ENCODE measurements at regions of chr19 and their contacts with region 1.

Region 1: DNA sequence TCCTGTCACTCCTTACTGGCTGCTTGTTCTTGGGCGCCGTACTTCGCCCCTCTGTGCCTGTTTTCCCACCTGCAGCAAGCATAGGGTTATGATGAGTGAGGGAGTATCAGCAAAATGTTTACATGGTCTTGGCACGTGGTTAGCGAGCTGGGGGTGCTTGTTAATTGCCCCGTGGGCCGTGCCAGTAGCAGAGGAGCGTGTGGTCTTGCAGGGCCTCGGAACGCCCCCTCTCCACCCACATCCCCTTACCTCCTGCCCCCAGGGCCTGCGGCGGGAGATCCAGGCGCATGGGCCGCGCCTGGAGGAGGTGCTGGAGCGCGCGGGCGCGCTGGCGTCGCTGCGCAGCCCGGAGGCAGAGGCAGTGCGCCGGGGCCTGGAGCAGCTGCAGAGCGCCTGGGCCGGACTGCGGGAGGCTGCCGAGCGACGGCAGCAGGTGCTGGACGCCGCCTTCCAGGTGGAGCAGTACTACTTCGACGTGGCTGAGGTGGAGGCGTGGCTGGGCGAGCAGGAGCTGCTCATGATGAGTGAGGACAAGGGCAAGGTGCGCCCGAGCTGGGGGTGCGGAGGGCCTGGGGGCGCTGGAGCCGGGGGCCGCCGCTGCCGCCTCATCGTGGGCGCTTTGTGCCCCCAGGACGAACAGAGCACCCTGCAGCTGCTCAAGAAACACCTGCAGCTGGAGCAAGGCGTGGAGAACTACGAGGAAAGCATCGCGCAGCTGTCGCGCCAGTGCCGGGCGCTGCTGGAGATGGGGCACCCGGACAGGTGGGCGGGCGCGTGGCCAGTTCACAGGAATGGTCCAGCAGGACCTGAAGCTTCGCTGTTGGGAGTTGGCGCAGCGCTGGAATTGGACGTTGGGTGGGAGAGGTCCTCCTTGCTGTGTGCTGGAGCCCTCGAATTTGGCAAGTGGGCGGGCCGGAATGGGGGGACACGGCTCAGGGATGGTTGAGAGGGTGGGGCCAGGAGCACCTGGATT is 22.5 kb upstream of the SHKBP1 start:
- DNase-seq: no peak
- H3K4me3 ChIP-seq: no peak overlapping the region
- H3K27ac ChIP-seq: no peak overlapping the region
- H3K4me1 ChIP-seq: no peaks in the 10 kb centered on the region
- H3K27me3 ChIP-seq: peaks cover 14% of the 10 kb centered on the region
- CTCF ChIP-seq: no peak

Region 2: GRCh38 chr19:39967561-39967960 is 586.6 kb before region 1 on chr19:
- intact Hi-C with region 1: no loop called
- DNase-seq: peak; percentile 4
- H3K4me3 ChIP-seq: no peak overlapping the region
- H3K27ac ChIP-seq: no peak overlapping the region
- H3K4me1 ChIP-seq: peaks cover 20% of the 10 kb centered on the region
- H3K27me3 ChIP-seq: no peaks in the 10 kb centered on the region
- CTCF ChIP-seq: no peak

Region 3: DNA sequence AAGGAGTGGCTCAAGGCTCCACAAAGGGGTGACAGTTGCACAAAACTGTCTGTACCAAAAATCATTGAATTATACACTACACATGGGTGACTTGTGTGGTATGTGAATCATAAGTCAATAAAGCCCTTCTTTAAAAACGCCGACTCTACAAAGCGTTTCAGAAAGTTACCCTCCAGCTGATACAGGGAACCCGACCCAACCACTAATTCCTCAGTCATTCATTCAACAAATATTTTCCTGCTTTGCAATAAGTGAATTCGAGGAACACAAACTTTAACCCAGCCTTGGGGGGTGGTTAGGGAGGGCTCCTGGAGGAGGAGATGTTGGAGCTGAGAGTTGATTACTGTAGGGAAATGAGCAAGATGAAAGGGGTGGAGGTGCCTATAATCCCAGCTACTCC is 79.0 kb after region 1 on chr19:
- intact Hi-C with region 1: loop called (anchors 5 kb)
- DNase-seq: no peak
- H3K4me3 ChIP-seq: no peak overlapping the region
- H3K27ac ChIP-seq: no peak overlapping the region
- H3K4me1 ChIP-seq: no peaks in the 10 kb centered on the region
- H3K27me3 ChIP-seq: no peaks in the 10 kb centered on the region
- CTCF ChIP-seq: no peak